H1 (cell line): ENCODE measurements at regions of chr5 and their contacts with region 1.

Region 1: GRCh38 chr5:177113566-177114424 is 19.8 kb upstream of the NSD1 start:
- DNase-seq: peak in 1 of 2 experiments; percentile 93
- H3K4me3 ChIP-seq: no peak overlapping the region
- H3K27ac ChIP-seq: no peak overlapping the region
- H3K4me1 ChIP-seq: peaks cover 0 to 4% (median 4%) of the 10 kb centered on the region in 4 experiments; a peak in 3 of 7 replicates
- H3K27me3 ChIP-seq: peaks cover 0 to 4% (median 1%) of the 10 kb centered on the region in 4 experiments; a peak in 2 of 7 replicates
- CTCF ChIP-seq: peak in 2 of 3 experiments; percentile 93 to 99; a peak in 3 of 4 replicates
- EP300 ChIP-seq: peak in 1 of 2 experiments; percentile 55; a peak in 1 of 3 replicates
- POLR2A ChIP-seq: no peak
- RAD21 ChIP-seq: peak; percentile 99

Region 2: GRCh38 chr5:176675675-176676360 is 438.0 kb before region 1 on chr5:
- CTCF ChIA-PET with region 1: no interaction called
- POLR2A ChIA-PET with region 1: no interaction called
- DNase-seq: peak in 1 of 2 experiments; percentile 74
- H3K4me3 ChIP-seq: no peak overlapping the region
- H3K27ac ChIP-seq: no peak overlapping the region
- H3K4me1 ChIP-seq: peaks cover 0 to 17% (median 11%) of the 10 kb centered on the region in 4 experiments; a peak in 6 of 7 replicates
- H3K27me3 ChIP-seq: peaks cover 0 to 18% (median 17%) of the 10 kb centered on the region in 4 experiments; a peak in 6 of 7 replicates
- CTCF ChIP-seq: peak in 2 of 3 experiments; percentile 65 to 86; a peak in 3 of 4 replicates
- EP300 ChIP-seq: no peak
- POLR2A ChIP-seq: no peak
- RAD21 ChIP-seq: peak; percentile 39 to 56

Region 3: DNA sequence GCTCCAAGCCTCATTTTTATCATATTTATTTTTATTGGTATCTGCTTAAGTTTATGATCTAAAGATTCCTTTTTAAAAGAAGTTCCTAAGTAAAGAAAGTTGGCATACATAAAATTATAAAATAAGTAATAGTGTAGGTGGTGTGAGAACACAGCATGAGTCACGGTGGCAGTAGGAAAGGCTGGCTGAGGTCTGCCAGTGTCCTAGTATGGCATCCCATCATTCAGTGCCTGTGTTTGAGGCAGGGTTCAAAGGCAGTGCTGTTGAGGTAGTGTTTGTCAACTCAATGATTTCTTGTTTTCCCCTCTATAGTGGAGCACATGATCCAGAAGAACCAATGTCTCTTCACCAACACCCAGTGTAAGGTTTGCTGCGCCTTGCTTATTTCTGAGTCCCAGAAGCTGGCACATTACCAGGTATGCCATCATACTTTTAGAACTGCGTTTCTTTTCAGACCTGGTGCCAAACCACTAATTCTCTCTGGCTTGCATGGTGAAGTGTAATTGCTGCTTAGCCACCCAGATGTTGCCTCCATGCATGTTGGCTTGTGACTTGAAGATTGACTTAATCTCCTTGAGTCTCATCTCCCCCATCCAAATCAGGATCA is 72.9 kb before region 1 on chr5:
- CTCF ChIA-PET with region 1: no interaction called
- POLR2A ChIA-PET with region 1: no interaction called
- DNase-seq: no peak
- H3K4me3 ChIP-seq: no peak overlapping the region
- H3K27ac ChIP-seq: no peak overlapping the region
- H3K4me1 ChIP-seq: peaks cover 0 to 5% (median 3%) of the 10 kb centered on the region in 4 experiments; a peak in 6 of 7 replicates
- H3K27me3 ChIP-seq: no peaks in the 10 kb centered on the region
- CTCF ChIP-seq: no peak
- EP300 ChIP-seq: no peak
- POLR2A ChIP-seq: no peak
- RAD21 ChIP-seq: no peak

Region 4: GRCh38 chr5:177079606-177080005 is 34.2 kb before region 1 on chr5:
- CTCF ChIA-PET with region 1: interaction called, 170 read pairs
- POLR2A ChIA-PET with region 1: no interaction called
- DNase-seq: no peak
- H3K4me3 ChIP-seq: no peak overlapping the region
- H3K27ac ChIP-seq: no peak overlapping the region
- H3K4me1 ChIP-seq: no peaks in the 10 kb centered on the region; a peak in 1 of 7 replicates
- H3K27me3 ChIP-seq: no peaks in the 10 kb centered on the region
- CTCF ChIP-seq: no peak
- EP300 ChIP-seq: no peak
- POLR2A ChIP-seq: no peak
- RAD21 ChIP-seq: no peak

Region 5: DNA sequence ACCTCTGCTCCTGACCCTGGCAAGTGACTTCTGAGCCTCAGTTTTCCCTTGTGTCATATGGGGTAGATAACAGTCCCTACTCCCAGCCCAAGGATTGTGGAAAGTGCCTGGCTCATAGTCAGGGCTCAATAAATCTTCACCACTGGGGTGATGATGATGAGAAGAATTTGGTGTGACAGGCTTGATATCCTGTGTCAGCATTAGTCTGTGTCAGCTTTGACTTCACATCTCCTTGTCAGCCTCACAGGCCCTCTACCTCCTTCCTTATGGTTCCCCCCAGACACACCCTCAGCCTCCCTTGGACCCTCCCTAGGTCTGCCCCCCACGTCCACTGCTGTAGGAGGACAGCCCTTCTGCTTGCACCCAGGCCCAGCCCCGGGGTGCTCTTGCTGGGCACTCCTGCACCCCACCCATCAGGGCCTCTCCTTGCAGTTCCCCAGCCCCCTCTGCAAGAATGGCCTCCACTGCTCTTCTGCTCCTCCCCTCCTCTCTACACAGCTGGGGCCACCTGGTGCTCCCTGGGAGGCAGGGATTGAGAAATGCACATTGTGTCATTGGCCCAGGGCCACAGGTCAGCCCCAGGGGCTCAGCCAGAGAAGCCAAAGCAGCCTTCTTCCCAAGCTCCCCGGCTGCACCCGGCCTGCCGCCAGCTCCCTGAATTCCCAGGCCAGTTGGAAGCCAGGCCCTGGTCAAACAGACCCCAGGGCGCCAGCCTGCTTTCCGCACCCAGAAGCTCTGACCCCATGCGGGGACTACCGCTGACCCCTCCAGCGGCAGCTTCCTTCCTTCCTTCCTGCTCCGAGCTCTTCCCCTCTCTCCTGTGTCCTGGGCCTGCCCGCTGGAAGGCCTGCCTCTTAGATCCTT is 19.3 kb before region 1 on chr5:
- CTCF ChIA-PET with region 1: interaction called, 161 read pairs
- POLR2A ChIA-PET with region 1: no interaction called
- DNase-seq: no peak
- H3K4me3 ChIP-seq: no peak overlapping the region
- H3K27ac ChIP-seq: no peak overlapping the region
- H3K4me1 ChIP-seq: peaks cover 0 to 11% (median 8%) of the 10 kb centered on the region in 4 experiments; a peak in 4 of 7 replicates
- H3K27me3 ChIP-seq: no peaks in the 10 kb centered on the region
- CTCF ChIP-seq: no peak
- EP300 ChIP-seq: no peak
- POLR2A ChIP-seq: no peak
- RAD21 ChIP-seq: no peak

Region 6: DNA sequence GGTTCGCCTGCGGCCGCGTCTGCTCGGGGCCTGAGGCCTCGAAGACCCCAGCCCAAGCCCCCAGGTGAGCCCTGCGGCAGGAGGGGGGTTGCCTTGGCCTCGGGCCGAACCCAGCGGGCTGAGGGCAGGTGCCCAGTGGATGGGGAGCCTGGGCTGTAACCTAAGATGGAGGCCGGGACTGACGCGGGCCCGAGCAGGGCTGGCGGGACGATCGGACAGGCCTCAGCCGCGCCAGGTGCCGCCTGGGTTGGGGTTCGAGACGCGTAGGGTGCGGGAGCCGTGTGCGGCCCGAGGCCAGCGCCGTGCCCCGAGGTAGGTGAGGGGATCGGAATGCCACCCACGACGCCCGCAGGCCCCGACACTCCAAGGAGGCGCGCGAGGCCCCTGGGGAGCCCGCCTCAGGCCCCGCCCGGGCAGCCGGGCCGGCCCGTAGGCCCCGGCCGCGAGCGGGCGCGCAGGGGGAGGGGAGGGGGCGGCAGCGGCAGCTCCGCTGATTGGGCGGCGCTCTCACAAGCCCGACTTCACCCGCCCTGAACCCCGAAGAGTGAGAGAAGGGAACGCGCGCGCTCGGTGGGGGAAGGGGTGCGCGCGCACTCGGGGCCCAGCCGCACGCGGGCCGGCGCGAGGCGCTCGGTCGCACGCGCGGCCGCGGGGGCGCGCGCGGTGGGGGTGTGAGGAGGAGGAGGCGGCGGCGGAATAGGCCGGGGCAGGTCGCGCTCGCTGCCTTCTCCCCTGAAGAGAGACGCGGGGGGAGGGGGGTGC is 19.5 kb after region 1 on chr5 and contains the start of gene NSD1:
- CTCF ChIA-PET with region 1: interaction called, 77 read pairs
- POLR2A ChIA-PET with region 1: interaction called, 101 read pairs
- DNase-seq: peak; percentile 79 to 94
- H3K4me3 ChIP-seq: peak within 1 kb of the TSS; percentile 74 to 94 (median 80)
- H3K27ac ChIP-seq: peak within 1 kb of the TSS; percentile 98
- H3K4me1 ChIP-seq: peaks cover 14 to 28% (median 21%) of the 10 kb centered on the region in 4 experiments
- H3K27me3 ChIP-seq: no peaks in the 10 kb centered on the region
- CTCF ChIP-seq: no peak
- EP300 ChIP-seq: no peak; a peak in 1 of 3 replicates
- POLR2A ChIP-seq: peak; percentile 79 to 87
- RAD21 ChIP-seq: no peak
- total RNA-seq, gene NSD1: 165 and 168 TPM in 2 replicates

Region 7: GRCh38 chr5:177253252-177253651 is 139.5 kb after region 1 on chr5:
- CTCF ChIA-PET with region 1: interaction called, 13 read pairs
- POLR2A ChIA-PET with region 1: interaction called, 3 read pairs
- DNase-seq: no peak
- H3K4me3 ChIP-seq: no peak overlapping the region
- H3K27ac ChIP-seq: no peak overlapping the region
- H3K4me1 ChIP-seq: no peaks in the 10 kb centered on the region
- H3K27me3 ChIP-seq: no peaks in the 10 kb centered on the region
- CTCF ChIP-seq: no peak
- EP300 ChIP-seq: no peak
- POLR2A ChIP-seq: no peak
- RAD21 ChIP-seq: no peak

Region 8: GRCh38 chr5:177303121-177303924 is 189.5 kb after region 1 on chr5 and contains the starts of genes PRELID1 and RAB24:
- CTCF ChIA-PET with region 1: interaction called, 60 read pairs
- POLR2A ChIA-PET with region 1: interaction called, 3 read pairs
- DNase-seq: peak in 1 of 2 experiments; percentile 97
- H3K4me3 ChIP-seq: peak within 1 kb of the TSS; percentile 91 to 99 (median 94)
- H3K27ac ChIP-seq: peak within 1 kb of the TSS; percentile 69
- H3K4me1 ChIP-seq: peaks cover 0 to 20% (median 5%) of the 10 kb centered on the region in 4 experiments; a peak in 5 of 7 replicates
- H3K27me3 ChIP-seq: no peaks in the 10 kb centered on the region
- CTCF ChIP-seq: peak in 2 of 3 experiments; percentile 1 to 16; a peak in 1 of 4 replicates
- EP300 ChIP-seq: no peak
- POLR2A ChIP-seq: peak in 1 of 2 experiments; percentile 50; a peak in 1 of 3 replicates
- RAD21 ChIP-seq: no peak
- total RNA-seq, gene PRELID1: 272 and 279 TPM in 2 replicates
- total RNA-seq, gene RAB24: 18.8 and 20.5 TPM in 2 replicates